GM18951 (cell line): ENCODE measurements at regions of chr1 and their contacts with region 1.

Region 1: GRCh38 chr1:25037174-25038074 is 107.3 kb upstream of the RUNX3 start:
- POLR2A ChIP-seq: no peak

Region 2: DNA sequence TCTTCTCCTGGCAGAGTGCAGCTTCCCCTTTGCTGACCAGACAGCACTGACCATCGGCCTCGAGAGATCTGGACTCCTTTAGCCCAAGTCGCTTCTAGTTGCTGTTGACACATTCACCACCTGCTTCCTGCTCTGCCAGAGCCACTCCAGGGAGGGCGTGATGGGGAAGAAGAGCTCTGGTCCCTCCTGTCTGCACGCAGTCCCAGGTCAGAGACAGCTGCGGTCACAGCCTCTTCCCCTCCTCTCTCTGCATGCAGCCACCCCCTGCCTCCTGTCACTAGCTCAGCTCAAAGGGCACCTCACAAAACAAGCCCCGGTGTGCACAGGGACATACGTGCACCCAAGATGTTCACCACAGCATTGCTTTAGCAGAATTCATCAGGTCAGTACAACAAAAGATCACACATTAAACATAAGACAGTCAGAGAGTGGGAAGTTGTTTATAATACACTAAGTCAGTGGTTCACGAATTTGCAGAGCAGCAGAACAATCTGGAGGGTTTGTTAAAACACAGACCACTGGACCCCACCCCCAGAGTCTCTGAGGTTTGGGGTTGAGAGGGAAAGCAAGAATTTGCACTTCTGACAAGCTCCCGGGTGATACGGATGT is 62.0 kb after region 1 on chr1:
- in situ Hi-C with region 1: loop called (anchors 5 kb)
- POLR2A ChIP-seq: no peak